ENCODE measurements at regions of chr5 and their contacts with region 1.

Region 1: GRCh38 chr5:157471709-157472108 is 11.7 kb downstream of the NIPAL4 start:
- DNase-seq: no peak
- H3K4me3 ChIP-seq: no peak overlapping the region
- CTCF ChIP-seq: peak; percentile 54

Region 2: GRCh38 chr5:157342822-157343402 is 128.8 kb before region 1 on chr5:
- CTCF ChIA-PET with region 1: interaction called, 39 read pairs
- POLR2A ChIA-PET with region 1: no interaction called
- DNase-seq: no peak
- H3K4me3 ChIP-seq: no peak overlapping the region
- CTCF ChIP-seq: peak; percentile 58

Region 3: DNA sequence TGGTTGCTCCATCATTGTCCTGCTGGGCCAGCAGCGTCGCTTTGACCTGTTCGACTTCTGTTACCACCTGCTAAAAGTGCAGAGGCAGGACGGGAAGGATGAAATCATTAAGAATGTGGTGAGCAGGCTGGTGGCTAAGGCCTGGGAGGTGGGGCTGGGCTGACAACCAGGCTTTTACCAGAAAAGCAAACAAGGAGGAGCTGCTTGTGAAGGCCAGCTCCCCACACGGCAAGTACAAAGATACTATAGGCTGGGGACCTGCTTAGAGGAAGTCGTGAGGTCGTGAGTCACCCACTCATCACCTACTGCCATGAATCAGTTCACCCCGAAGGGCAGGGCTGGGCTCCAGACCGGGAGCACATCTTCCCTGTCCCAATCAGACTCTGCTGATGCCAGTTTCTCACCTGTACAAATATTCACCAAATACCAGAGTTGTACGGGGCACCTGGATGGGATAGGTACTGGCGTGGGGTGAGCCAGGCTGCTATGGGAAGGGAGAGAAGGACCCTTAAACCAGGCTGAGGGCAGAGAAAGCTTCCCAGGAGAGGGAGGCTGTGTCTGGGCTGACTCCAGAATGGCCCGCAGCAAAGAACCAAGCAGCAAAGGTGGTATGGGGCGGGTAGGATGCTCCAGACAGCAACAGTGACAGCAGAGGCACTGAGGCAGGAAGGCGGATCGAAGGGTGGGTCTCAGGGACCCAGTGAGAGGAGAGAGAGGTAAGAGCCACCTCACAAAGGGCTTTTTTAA is 81.0 kb before region 1 on chr5:
- CTCF ChIA-PET with region 1: interaction called, 18 read pairs
- POLR2A ChIA-PET with region 1: no interaction called
- DNase-seq: peak; percentile 82
- H3K4me3 ChIP-seq: no peak overlapping the region
- CTCF ChIP-seq: no peak

Region 4: GRCh38 chr5:157456301-157456700 is 15.4 kb before region 1 on chr5:
- CTCF ChIA-PET with region 1: interaction called, 40 read pairs
- POLR2A ChIA-PET with region 1: interaction called, 3 read pairs
- DNase-seq: no peak
- H3K4me3 ChIP-seq: no peak overlapping the region
- CTCF ChIP-seq: no peak

Measured in AG04449 (cell line).